ENCODE measurements at regions of chr15 and their contacts with region 1.

Region 1: GRCh38 chr15:99059010-99059981 is 45.6 kb upstream of the SYNM start:
- DNase-seq: peak; percentile 57 to 69 (median 63)
- ATAC-seq: peak; percentile 89 to 97 (median 94)
- H3K4me3 ChIP-seq: peak overlapping the region; percentile 21 to 40 (median 36)
- H3K27ac ChIP-seq: peak overlapping the region in 1 of 3 donors; percentile 22
- H3K4me1 ChIP-seq: peaks cover 0 to 6% (median 0%) of the 10 kb centered on the region in 4 donors
- H3K27me3 ChIP-seq: peaks cover 0 to 7% of the 10 kb centered on the region in 2 donors
- CTCF ChIP-seq: peak; percentile 65 to 77 (median 75)
- POLR2A ChIP-seq: no peak

Region 2: GRCh38 chr15:98745650-98746622 is 313.4 kb before region 1 on chr15:
- intact Hi-C with region 1: no loop called
- DNase-seq: no peak
- ATAC-seq: no peak
- H3K4me3 ChIP-seq: no peak overlapping the region
- H3K27ac ChIP-seq: no peak overlapping the region
- H3K4me1 ChIP-seq: no peaks in the 10 kb centered on the region
- H3K27me3 ChIP-seq: no peaks in the 10 kb centered on the region
- CTCF ChIP-seq: no peak
- POLR2A ChIP-seq: no peak

Region 3: DNA sequence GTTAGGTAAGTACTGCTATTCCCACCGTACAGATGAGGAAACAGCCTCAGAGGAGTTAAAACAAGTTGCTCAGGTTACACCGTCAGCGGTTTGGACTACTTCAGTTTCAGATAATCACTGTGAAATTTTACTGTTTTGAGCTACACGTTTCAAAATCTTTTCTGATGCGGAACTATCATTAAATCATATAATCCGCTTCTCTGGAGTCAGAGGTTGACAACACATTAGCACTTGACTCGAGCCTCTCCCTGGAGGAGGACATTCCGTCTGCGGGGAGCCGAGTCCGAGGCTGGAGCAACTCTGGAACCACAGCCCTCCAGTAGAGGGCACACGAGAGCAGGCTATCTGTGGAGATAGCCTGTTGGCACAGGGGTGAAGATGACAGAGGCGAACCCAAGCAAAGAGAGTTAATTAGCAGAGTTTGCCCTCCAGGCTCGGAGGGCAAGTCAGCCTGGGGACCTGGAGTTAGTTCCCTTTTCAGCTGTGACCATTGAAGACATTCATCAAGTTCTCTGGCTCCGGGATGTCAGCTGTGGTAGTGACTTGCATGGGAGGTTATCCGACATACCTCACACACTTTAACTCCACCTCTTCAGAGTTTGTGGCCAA is 279.7 kb before region 1 on chr15:
- intact Hi-C with region 1: loop called in 1 of 2 experiments (anchors 10 kb)
- DNase-seq: peak; percentile 77 to 78 (median 78)
- ATAC-seq: peak; percentile 97 to 98 (median 98)
- H3K4me3 ChIP-seq: no peak overlapping the region
- H3K27ac ChIP-seq: no peak overlapping the region
- H3K4me1 ChIP-seq: no peaks in the 10 kb centered on the region
- H3K27me3 ChIP-seq: peaks cover 0 to 2% of the 10 kb centered on the region in 2 donors
- CTCF ChIP-seq: peak; percentile 77 to 97 (median 92)
- POLR2A ChIP-seq: no peak

Region 4: GRCh38 chr15:99181545-99181971 is 122.3 kb after region 1 on chr15:
- intact Hi-C with region 1: no loop called
- DNase-seq: no peak
- ATAC-seq: peak in 3 of 4 donors; percentile 29 to 54 (median 42)
- H3K4me3 ChIP-seq: no peak overlapping the region
- H3K27ac ChIP-seq: no peak overlapping the region
- H3K4me1 ChIP-seq: no peaks in the 10 kb centered on the region
- H3K27me3 ChIP-seq: no peaks in the 10 kb centered on the region
- CTCF ChIP-seq: no peak
- POLR2A ChIP-seq: no peak

Measured in right lobe of liver (tissue), 6 donors.